HepG2 (cell line): ENCODE measurements at regions of chr5 and their contacts with region 1.

Region 1: DNA sequence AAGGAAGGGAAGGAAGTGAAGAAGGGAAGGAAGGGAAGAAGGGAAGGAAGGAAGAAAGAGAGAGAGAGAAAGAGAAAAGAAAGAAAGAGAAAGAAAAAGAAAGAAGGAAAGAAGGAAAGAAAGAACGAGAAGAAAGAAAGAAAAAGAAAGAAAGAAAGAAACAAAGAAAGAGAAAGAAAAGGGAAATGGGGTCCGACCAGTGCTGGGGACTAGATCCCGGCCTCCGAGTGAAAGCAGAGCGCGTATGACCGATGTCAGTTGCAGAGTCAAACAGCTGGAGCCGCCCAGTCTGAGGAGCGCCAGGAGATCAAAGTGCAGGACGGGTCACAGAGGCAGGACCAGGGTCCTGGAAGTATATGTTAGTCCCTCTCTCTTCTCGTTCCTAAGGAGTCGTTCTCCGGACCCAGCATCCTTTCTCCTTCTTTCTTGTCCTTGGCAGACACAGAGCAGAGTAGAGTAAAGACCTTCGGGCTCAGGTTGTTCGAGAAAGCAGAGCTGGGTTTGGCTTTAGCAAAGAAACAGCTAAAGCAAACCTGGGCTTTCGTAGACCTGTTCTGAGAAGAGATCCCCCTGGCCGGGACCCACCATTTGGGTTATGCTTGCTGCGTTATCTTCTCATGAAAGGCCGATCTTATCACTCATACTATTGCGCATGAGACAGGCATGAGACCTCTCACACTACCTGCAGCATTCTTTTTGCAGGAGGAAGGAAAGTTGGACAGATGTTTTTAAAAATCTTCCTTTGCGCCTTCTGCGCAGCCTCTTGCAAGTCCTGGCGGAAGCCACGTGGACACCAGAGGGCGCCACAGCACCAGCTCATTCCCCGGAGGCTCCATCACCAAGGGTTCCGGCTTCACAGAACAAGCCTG is 305.2 kb upstream of the MSX2 start:
- DNase-seq: peak; percentile 57
- ATAC-seq: peak; percentile 98
- H3K4me3 ChIP-seq: no peak overlapping the region
- H3K27ac ChIP-seq: no peak overlapping the region
- H3K4me1 ChIP-seq: peaks cover 8% of the 10 kb centered on the region; the same call in 1 of the 2 replicates
- H3K27me3 ChIP-seq: no peaks in the 10 kb centered on the region
- CTCF ChIP-seq: peak; percentile 90
- EP300 ChIP-seq: no peak
- POLR2A ChIP-seq: no peak
- RAD21 ChIP-seq: peak; percentile 78

Region 2: GRCh38 chr5:174139623-174140022 is 279.5 kb before region 1 on chr5:
- CTCF ChIA-PET with region 1: no interaction called
- POLR2A ChIA-PET with region 1: no interaction called
- in situ Hi-C with region 1: no loop called
- intact Hi-C with region 1: no loop called
- DNase-seq: no peak
- ATAC-seq: no peak
- H3K4me3 ChIP-seq: no peak overlapping the region
- H3K27ac ChIP-seq: no peak overlapping the region
- H3K4me1 ChIP-seq: no peaks in the 10 kb centered on the region
- H3K27me3 ChIP-seq: peaks cover 1 to 6% of the 10 kb centered on the region in 2 experiments; a peak in 3 of 5 replicates
- CTCF ChIP-seq: no peak
- EP300 ChIP-seq: no peak
- POLR2A ChIP-seq: no peak
- RAD21 ChIP-seq: no peak

Region 3: GRCh38 chr5:174402221-174402815 is 16.8 kb before region 1 on chr5:
- CTCF ChIA-PET with region 1: no interaction called
- POLR2A ChIA-PET with region 1: no interaction called
- in situ Hi-C with region 1: no loop called
- intact Hi-C with region 1: no loop called
- DNase-seq: no peak
- ATAC-seq: no peak
- H3K4me3 ChIP-seq: no peak overlapping the region
- H3K27ac ChIP-seq: no peak overlapping the region
- H3K4me1 ChIP-seq: no peaks in the 10 kb centered on the region
- H3K27me3 ChIP-seq: peaks cover 0 to 15% of the 10 kb centered on the region in 2 experiments; a peak in 3 of 5 replicates
- CTCF ChIP-seq: no peak
- EP300 ChIP-seq: no peak
- POLR2A ChIP-seq: no peak
- RAD21 ChIP-seq: no peak

Region 4: GRCh38 chr5:174735498-174736330 is 316.6 kb after region 1 on chr5:
- CTCF ChIA-PET with region 1: interaction called, 18 read pairs
- POLR2A ChIA-PET with region 1: no interaction called
- in situ Hi-C with region 1: loop called (anchors 5 kb)
- intact Hi-C with region 1: loop called (anchors 1 kb)
- DNase-seq: peak; percentile 5
- ATAC-seq: peak; percentile 65
- H3K4me3 ChIP-seq: no peak overlapping the region
- H3K27ac ChIP-seq: no peak overlapping the region
- H3K4me1 ChIP-seq: no peaks in the 10 kb centered on the region
- H3K27me3 ChIP-seq: peaks cover 4 to 51% of the 10 kb centered on the region in 2 experiments
- CTCF ChIP-seq: peak; percentile 60
- EP300 ChIP-seq: no peak
- POLR2A ChIP-seq: no peak
- RAD21 ChIP-seq: peak; percentile 42; the same call in 1 of the 2 replicates

Region 5: DNA sequence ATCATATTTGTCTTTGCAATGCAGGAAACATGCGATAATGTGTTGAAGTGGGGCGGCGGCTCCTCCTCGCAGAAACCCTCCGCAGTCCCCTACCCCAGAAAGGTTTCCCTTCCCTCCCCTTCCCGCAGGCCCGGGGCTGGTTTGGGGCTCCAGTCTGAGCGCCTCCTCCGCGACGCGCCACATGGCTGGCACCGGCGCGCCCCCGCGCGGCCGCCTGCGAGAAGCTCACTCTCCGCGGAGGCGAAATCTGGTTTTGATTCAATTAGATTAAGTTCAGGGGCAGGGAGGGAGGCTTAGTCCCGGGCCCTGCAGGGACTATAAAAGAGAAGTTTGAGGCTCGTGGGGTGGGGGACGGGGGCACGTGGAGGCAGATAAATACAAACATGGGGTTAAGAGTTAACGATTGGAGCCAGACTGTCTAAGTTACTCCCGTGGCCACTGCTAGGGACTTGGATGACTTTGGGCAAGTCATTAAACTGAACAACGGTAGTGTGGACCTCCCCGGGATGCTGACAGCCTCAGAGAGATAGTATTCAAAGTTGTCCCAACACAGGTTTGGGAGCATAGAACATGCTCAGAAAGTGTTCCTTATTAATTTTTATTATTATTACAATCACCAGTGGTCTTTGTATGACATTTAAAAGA is 374.6 kb after region 1 on chr5:
- CTCF ChIA-PET with region 1: interaction called, 25 read pairs
- POLR2A ChIA-PET with region 1: no interaction called
- in situ Hi-C with region 1: loop called (anchors 5 kb)
- intact Hi-C with region 1: loop called (anchors 1 kb)
- DNase-seq: peak; percentile 18
- ATAC-seq: peak; percentile 93
- H3K4me3 ChIP-seq: no peak overlapping the region
- H3K27ac ChIP-seq: no peak overlapping the region
- H3K4me1 ChIP-seq: no peaks in the 10 kb centered on the region
- H3K27me3 ChIP-seq: peaks cover 2 to 19% of the 10 kb centered on the region in 2 experiments; a peak in 3 of 5 replicates
- CTCF ChIP-seq: peak; percentile 86
- EP300 ChIP-seq: no peak
- POLR2A ChIP-seq: no peak
- RAD21 ChIP-seq: peak; percentile 52; the same call in 1 of the 2 replicates

Region 6: DNA sequence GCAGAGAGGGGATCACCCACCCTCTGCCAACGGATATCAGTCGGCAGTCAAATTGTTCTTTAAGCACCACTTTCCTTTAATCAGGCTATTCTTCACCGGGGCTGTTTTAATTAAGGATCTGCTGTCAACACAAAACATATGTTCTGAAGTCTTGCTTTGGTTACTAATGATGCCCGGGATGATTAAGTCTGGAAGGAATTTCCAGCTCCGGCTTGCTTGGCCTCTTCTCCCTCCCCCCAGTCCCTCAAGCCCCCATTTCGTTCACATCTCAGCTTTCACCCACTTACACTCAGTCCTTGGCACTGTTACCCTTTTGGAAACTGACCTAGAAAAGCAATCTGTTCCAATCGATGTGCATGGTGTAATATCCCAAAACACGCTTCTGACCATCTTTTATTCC is 380.0 kb after region 1 on chr5:
- CTCF ChIA-PET with region 1: interaction called, 25 read pairs
- POLR2A ChIA-PET with region 1: no interaction called
- in situ Hi-C with region 1: loop called (anchors 5 kb)
- intact Hi-C with region 1: no loop called
- DNase-seq: no peak
- ATAC-seq: no peak
- H3K4me3 ChIP-seq: no peak overlapping the region
- H3K27ac ChIP-seq: no peak overlapping the region
- H3K4me1 ChIP-seq: no peaks in the 10 kb centered on the region
- H3K27me3 ChIP-seq: peaks cover 1 to 10% of the 10 kb centered on the region in 2 experiments; a peak in 3 of 5 replicates
- CTCF ChIP-seq: no peak
- EP300 ChIP-seq: no peak
- POLR2A ChIP-seq: no peak
- RAD21 ChIP-seq: no peak